ENCODE measurements at regions of chr11 and their contacts with region 1.

Region 1: DNA sequence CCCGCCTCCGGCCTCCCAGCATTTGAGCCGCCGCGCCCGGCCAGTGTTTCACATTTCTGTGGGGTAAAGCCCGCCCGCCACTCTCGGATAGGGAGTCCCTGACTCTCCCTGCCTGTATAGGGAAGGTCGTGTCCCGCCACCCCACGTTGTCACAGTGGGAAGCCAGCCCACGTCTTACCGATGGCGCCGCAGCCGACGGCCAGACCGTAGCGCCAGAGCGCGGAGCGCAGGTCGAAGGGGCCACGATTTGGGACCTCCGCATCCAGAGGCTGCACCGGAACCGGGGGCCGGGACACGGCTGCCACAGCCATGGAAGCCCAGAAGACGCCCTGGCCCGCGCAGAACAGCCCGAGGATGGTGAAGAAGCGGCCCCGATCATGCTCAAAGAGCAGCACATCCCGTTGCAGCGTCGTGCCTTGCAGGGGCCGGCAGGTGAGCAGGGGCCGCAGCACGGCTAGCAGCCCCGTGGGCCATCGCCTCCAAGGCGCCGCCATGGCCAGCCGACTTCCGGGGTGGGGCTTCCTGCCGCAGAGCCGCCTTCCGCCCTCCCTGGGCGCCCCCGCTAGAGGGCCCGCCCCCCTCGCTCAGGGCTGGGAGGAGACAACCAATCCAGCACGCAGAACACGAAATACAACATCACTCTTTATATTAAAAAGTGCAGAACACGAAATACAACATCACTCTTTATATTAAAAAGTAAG is at the start of gene TMEM223:
- DNase-seq: peak; percentile 79 to 97
- H3K4me3 ChIP-seq: peak within 1 kb of the TSS; percentile 77
- CTCF ChIP-seq: no peak
- POLR2A ChIP-seq: no peak
- total RNA-seq, gene TMEM223: 12.9 to 41.4 (median 21.0) TPM

Region 2: GRCh38 chr11:62855571-62856332 is 64.1 kb after region 1 on chr11:
- intact Hi-C with region 1: loop called (anchors 10 kb)
- DNase-seq: peak; percentile 95 to 99
- H3K4me3 ChIP-seq: peak overlapping the region; percentile 96
- CTCF ChIP-seq: no peak
- POLR2A ChIP-seq: peak in 1 of 2 donors; percentile 85

Region 3: DNA sequence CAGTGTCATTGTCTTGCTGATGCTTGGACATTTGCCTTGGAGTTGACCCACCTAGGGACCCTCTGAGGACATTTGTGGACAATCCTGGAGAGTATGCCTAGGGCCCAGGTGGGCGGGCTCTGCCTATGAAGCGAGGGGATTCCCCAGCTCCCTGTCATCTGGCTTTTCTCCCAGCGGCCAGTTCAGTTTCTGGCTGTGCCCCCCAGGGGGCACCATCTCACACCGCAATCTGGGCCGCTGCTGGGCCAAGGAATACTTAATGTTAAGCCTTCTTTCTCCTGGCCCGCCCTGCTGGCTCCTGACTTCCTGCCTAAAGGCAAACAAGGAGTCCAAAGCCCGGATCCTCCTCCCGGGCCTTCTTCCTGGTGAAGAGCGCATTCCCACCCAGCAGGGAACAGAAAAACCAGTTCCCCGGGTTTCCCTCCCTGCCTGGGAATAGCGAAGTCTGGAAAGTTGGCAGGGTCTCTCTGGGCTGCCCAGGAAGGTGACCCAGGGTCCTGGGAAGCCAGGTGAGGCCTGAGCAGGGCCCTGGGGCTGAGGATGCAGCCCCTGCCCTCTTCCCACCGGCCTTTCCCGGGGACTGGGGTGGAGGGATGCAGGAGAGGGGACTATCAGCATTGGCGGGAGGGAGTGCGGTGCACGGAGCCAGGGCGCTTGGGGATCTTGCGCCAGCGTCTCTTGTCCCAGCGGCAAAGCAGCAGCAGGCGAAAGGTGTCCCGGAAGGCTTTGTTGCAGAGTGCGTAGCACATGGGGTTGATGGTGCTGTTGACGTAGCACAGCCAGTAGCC is 117.7 kb after region 1 on chr11:
- intact Hi-C with region 1: no loop called
- DNase-seq: peak; percentile 52 to 91
- H3K4me3 ChIP-seq: no peak overlapping the region
- CTCF ChIP-seq: no peak
- POLR2A ChIP-seq: no peak